Activated CD4-positive, alpha-beta memory T cell treated with anti-CD3 and anti-CD28 coated beads for 36 hours (primary cell): ENCODE measurements at regions of chr22 and their contacts with region 1.

Region 1: DNA sequence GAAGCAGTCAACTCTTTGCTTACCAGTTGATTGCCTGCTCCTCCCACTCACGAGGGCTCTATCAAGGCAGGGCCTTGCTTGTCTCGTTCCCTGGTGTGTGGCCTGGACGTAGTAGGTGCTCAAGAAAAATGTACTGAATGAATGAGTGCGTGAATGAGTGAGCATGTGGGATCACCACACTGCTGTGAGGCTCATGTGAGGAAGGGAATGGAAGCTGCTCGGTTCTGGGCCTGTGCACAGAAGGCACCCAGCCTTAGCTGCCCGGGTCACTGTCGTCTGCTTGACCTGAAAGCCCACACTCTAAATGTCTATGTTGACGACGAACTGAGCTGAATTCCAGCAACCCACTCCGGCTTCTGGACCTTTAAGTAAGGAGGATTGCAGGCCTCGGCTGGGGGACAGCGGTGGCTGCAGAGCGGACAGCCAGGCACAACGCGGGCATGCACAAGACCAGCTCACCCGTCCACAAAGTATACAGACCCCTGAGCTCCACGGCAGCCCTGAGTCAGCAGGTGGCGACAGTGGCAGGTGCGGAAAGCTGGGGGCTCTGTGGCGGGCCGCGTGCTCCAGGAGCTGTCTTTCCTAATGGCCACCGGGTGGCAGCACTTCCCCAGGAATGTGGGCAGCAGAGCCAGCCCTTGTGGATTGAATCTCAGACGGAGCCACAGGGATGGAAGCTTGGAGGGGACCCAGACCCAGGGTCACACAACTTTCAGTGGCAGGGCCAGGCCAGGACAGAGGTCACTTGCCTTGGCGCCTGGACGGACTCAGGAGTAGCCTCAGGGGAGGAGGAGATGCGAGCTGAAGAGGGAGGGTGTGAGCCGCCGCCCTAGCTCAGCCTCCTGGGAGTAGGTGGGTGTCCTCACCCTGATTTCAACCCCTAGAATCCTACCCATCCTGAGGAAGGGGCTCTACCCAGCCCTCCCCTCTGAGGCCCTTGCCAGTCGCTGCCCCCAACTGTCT is 5.0 kb upstream of the PICK1 start:
- DNase-seq: peak; percentile 82
- H3K4me3 Mint-ChIP-seq: no peak overlapping the region
- H3K27ac Mint-ChIP-seq: no peak overlapping the region
- H3K4me1 Mint-ChIP-seq: peaks cover 4% of the 10 kb centered on the region
- H3K27me3 Mint-ChIP-seq: peaks cover 2% of the 10 kb centered on the region

Region 2: DNA sequence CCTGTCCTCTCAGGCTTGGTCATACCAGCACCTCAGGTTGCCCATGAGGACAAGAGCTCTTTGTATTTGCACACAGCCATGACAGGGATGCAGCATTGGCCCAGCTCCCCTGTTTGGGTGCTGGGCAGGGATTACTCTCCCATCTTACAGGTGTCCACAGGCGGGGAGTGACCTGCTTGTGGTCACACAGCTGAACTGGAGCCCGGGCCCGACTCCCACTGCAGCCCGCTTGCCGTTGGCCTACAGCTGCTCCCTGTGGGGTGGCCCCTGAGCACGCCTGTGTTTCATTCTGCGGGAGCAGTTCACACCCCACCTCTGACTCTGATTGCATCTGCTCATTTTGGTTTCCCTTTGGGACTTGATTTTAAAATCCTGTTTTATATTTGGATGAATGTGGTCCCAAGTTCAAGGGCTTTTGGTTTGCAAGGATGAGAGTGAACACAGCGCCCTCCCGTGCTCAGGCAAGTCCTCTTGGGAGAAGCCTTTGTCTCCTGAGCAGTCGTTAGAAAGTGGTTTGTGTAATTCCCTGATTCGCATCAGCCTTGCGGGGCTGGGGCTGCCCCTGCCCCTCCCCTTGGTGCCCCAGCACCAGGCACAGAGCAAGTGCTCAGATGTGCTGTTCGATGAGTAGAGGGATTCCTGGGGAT is 14.3 kb after region 1 on chr22:
- CTCF ChIA-PET with region 1: interaction called, 16 read pairs
- POLR2A ChIA-PET with region 1: no interaction called
- intact Hi-C with region 1: no loop called
- DNase-seq: no peak
- H3K4me3 Mint-ChIP-seq: no peak overlapping the region
- H3K27ac Mint-ChIP-seq: no peak overlapping the region
- H3K4me1 Mint-ChIP-seq: no peaks in the 10 kb centered on the region
- H3K27me3 Mint-ChIP-seq: no peaks in the 10 kb centered on the region

Region 3: GRCh38 chr22:38114484-38115398 is 62.6 kb after region 1 on chr22:
- CTCF ChIA-PET with region 1: interaction called, 15 read pairs
- POLR2A ChIA-PET with region 1: no interaction called
- intact Hi-C with region 1: loop called (anchors 10 kb)
- DNase-seq: peak; percentile 85
- H3K4me3 Mint-ChIP-seq: no peak overlapping the region
- H3K27ac Mint-ChIP-seq: no peak overlapping the region
- H3K4me1 Mint-ChIP-seq: peaks cover 3% of the 10 kb centered on the region
- H3K27me3 Mint-ChIP-seq: no peaks in the 10 kb centered on the region

Region 4: GRCh38 chr22:38291201-38291777 is 239.1 kb after region 1 on chr22:
- CTCF ChIA-PET with region 1: no interaction called
- POLR2A ChIA-PET with region 1: no interaction called
- intact Hi-C with region 1: no loop called
- DNase-seq: no peak
- H3K4me3 Mint-ChIP-seq: no peak overlapping the region
- H3K27ac Mint-ChIP-seq: no peak overlapping the region
- H3K4me1 Mint-ChIP-seq: no peaks in the 10 kb centered on the region
- H3K27me3 Mint-ChIP-seq: no peaks in the 10 kb centered on the region

Region 5: GRCh38 chr22:38353142-38353629 is 301.0 kb after region 1 on chr22:
- CTCF ChIA-PET with region 1: interaction called, 21 read pairs
- POLR2A ChIA-PET with region 1: no interaction called
- intact Hi-C with region 1: loop called (anchors 5 kb)
- DNase-seq: peak; percentile 76
- H3K4me3 Mint-ChIP-seq: no peak overlapping the region
- H3K27ac Mint-ChIP-seq: no peak overlapping the region
- H3K4me1 Mint-ChIP-seq: no peaks in the 10 kb centered on the region
- H3K27me3 Mint-ChIP-seq: no peaks in the 10 kb centered on the region